Activated B cell treated with CpG ODN at 0.5 μM for 24 hours (primary cell): ENCODE measurements at regions of chr10 and their contacts with region 1.

Region 1: DNA sequence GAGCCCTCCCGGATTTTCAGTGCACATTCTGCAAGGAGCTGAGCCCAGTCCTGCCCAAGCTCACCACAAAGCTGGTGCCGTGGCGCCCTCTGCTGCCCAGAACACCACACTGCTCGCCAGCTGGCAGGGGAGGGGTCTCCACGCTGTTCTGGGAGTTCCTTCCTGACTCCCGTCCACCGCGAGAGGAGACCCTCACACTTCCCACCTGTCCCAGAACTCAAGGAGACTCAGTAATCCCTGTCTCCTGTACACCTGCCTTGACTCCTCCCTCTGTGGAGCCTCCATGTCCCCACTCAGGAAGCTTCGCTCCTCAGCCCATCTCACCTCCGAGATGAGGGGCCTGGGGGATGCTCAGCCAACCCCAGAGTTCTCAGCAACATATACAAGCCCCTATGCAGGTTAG is 11.3 kb downstream of the C10orf105 start:
- DNase-seq: peak; percentile 71
- ATAC-seq: peak; percentile 84
- H3K4me3 Mint-ChIP-seq: no peak overlapping the region
- H3K27ac Mint-ChIP-seq: no peak overlapping the region
- H3K4me1 Mint-ChIP-seq: peaks cover 22% of the 10 kb centered on the region
- H3K27me3 Mint-ChIP-seq: no peaks in the 10 kb centered on the region
- CTCF ChIP-seq: peak; percentile 33

Region 2: GRCh38 chr10:71161425-71161824 is 546.9 kb before region 1 on chr10:
- CTCF ChIA-PET with region 1: no interaction called
- POLR2A ChIA-PET with region 1: no interaction called
- intact Hi-C with region 1: no loop called
- DNase-seq: no peak
- ATAC-seq: peak; percentile 54
- H3K4me3 Mint-ChIP-seq: no peak overlapping the region
- H3K27ac Mint-ChIP-seq: no peak overlapping the region
- H3K4me1 Mint-ChIP-seq: no peaks in the 10 kb centered on the region
- H3K27me3 Mint-ChIP-seq: peaks cover 5% of the 10 kb centered on the region
- CTCF ChIP-seq: no peak

Region 3: GRCh38 chr10:71314028-71314693 is 394.1 kb before region 1 on chr10:
- CTCF ChIA-PET with region 1: interaction called, 46 read pairs
- POLR2A ChIA-PET with region 1: interaction called, 5 read pairs
- intact Hi-C with region 1: loop called (anchors 1 kb)
- DNase-seq: peak; percentile 29
- ATAC-seq: peak; percentile 40
- H3K4me3 Mint-ChIP-seq: no peak overlapping the region
- H3K27ac Mint-ChIP-seq: no peak overlapping the region
- H3K4me1 Mint-ChIP-seq: peaks cover 15% of the 10 kb centered on the region
- H3K27me3 Mint-ChIP-seq: peaks cover 10% of the 10 kb centered on the region
- CTCF ChIP-seq: no peak

Region 4: DNA sequence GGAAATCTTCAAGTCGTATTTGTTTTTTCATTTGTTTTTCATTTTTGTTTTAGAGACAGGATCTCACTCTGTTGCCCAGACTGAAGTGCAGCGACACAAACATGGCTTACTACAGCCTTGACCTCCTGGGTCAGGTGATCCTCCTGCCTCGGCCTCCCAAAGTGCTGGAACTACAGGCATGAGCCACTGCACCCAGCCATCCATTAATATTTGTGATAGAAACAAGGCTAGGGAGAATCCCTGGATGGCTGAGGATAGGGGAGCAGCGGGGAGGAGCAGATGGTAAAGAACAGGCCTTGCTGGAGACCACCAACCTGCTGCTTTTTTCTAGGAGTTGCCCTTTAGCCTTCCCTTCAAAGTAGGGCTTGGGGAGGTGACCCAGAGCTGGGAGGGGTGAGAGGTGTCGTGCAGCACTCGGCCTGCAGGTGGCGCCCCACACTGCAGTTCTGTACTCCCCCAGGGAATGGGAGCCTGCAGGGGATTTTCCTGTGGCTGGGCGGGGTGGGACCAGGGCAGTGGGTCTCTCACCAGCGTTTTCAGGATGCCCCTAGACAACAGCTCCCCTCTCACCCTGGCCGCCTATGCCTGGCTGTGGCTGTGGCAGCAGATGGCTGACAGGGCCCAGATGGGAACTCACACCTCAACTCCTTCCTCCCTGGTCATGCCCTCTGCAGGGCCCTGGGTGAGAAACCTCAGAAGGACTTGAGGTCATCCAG is 324.2 kb before region 1 on chr10:
- CTCF ChIA-PET with region 1: interaction called, 20 read pairs
- POLR2A ChIA-PET with region 1: interaction called, 4 read pairs
- intact Hi-C with region 1: loop called (anchors 1 kb)
- DNase-seq: peak; percentile 82
- ATAC-seq: peak; percentile 100
- H3K4me3 Mint-ChIP-seq: no peak overlapping the region
- H3K27ac Mint-ChIP-seq: no peak overlapping the region
- H3K4me1 Mint-ChIP-seq: peaks cover 7% of the 10 kb centered on the region
- H3K27me3 Mint-ChIP-seq: peaks cover 3% of the 10 kb centered on the region
- CTCF ChIP-seq: no peak

Region 5: GRCh38 chr10:71536332-71536731 is 172.0 kb before region 1 on chr10:
- CTCF ChIA-PET with region 1: no interaction called
- POLR2A ChIA-PET with region 1: no interaction called
- intact Hi-C with region 1: no loop called
- DNase-seq: no peak
- ATAC-seq: no peak
- H3K4me3 Mint-ChIP-seq: no peak overlapping the region
- H3K27ac Mint-ChIP-seq: no peak overlapping the region
- H3K4me1 Mint-ChIP-seq: no peaks in the 10 kb centered on the region
- H3K27me3 Mint-ChIP-seq: no peaks in the 10 kb centered on the region
- CTCF ChIP-seq: no peak

Region 6: GRCh38 chr10:71569775-71570588 is 138.3 kb before region 1 on chr10:
- CTCF ChIA-PET with region 1: interaction called, 17 read pairs
- POLR2A ChIA-PET with region 1: no interaction called
- intact Hi-C with region 1: loop called (anchors 5 kb)
- DNase-seq: peak; percentile 62
- ATAC-seq: peak; percentile 67
- H3K4me3 Mint-ChIP-seq: no peak overlapping the region
- H3K27ac Mint-ChIP-seq: no peak overlapping the region
- H3K4me1 Mint-ChIP-seq: no peaks in the 10 kb centered on the region
- H3K27me3 Mint-ChIP-seq: peaks cover 5% of the 10 kb centered on the region
- CTCF ChIP-seq: no peak

Region 7: DNA sequence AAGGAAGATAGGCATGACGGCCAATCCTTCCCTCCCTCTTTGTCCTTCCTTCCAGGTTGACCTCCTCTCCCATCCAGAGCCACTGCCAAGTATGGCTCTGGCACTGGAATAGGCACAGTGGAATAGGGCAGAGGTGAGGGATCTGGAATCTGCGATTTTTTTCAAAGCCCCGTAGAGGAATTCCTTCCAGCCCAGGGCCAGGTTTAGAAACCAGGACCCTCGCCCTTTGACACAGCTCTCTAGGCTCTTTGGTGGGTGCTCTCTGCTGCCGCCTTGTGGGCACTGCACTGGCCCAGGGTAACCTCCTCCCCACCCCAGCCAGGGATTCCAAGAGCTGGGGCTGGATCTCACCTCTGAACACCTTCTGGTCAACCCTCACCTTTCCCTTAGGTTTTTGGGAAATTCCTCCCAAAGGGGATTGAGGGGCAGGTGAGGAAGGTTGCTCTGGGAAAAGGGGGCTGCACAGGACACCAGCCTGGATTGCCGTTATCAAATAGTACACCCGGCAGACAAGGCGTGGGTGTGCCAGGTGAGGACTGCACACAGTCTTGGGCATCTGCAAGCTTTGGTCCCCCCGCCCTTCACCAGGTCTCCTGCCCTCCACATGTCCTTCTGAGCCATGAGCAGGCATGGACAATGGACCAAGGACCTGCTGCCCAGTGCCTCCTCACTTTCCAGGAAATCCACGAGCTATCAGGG is 11.5 kb before region 1 on chr10:
- CTCF ChIA-PET with region 1: interaction called, 22 read pairs
- POLR2A ChIA-PET with region 1: interaction called, 7 read pairs
- intact Hi-C with region 1: loop called (anchors 1 kb)
- DNase-seq: peak; percentile 59
- ATAC-seq: no peak
- H3K4me3 Mint-ChIP-seq: no peak overlapping the region
- H3K27ac Mint-ChIP-seq: no peak overlapping the region
- H3K4me1 Mint-ChIP-seq: peaks cover 63% of the 10 kb centered on the region
- H3K27me3 Mint-ChIP-seq: no peaks in the 10 kb centered on the region
- CTCF ChIP-seq: peak; percentile 27

Region 8: DNA sequence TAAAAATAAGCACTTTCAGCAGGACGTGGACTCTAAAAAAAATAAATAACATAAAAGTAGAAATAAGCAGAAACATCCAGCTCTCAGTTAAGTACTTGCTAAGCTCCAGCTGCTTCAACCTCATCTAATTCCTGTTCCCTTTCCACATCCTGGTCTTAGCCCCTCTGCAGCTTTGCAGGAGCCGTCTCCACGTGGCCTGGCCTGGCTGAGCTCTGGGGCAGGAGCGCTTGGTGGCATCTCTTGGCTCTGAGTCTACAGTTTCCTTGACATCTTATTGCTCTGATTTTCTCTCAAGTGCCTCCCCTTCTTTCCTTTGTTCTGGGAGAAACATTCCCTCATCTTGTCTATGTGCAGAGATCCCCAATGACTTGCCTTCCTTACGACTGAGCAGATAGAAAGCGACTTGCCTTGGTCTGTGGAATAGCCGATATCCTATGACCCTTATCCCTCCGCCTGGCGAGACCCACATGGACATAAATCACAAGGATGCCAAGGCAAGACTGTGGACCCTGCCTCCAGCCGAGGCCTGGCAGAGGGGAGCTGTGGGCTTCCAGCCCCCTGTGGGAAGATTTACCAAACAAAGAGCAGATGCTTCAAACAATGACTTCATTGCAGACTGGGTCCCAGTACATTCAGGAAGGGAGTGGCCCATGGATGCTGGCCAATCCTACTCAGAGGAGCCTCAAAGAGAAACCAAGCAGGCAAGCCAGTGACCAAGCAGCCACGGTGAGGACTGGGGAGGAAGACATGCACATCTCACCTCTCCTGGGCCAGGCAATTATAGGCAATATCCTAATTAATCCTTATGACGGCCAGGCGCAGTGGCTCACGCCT is 318.2 kb after region 1 on chr10:
- CTCF ChIA-PET with region 1: no interaction called
- POLR2A ChIA-PET with region 1: no interaction called
- intact Hi-C with region 1: no loop called
- DNase-seq: no peak
- ATAC-seq: no peak
- H3K4me3 Mint-ChIP-seq: no peak overlapping the region
- H3K27ac Mint-ChIP-seq: no peak overlapping the region
- H3K4me1 Mint-ChIP-seq: no peaks in the 10 kb centered on the region
- H3K27me3 Mint-ChIP-seq: peaks cover 16% of the 10 kb centered on the region
- CTCF ChIP-seq: no peak